PC-9 (cell line): ENCODE measurements at regions of chr2 and their contacts with region 1.

Region 1: DNA sequence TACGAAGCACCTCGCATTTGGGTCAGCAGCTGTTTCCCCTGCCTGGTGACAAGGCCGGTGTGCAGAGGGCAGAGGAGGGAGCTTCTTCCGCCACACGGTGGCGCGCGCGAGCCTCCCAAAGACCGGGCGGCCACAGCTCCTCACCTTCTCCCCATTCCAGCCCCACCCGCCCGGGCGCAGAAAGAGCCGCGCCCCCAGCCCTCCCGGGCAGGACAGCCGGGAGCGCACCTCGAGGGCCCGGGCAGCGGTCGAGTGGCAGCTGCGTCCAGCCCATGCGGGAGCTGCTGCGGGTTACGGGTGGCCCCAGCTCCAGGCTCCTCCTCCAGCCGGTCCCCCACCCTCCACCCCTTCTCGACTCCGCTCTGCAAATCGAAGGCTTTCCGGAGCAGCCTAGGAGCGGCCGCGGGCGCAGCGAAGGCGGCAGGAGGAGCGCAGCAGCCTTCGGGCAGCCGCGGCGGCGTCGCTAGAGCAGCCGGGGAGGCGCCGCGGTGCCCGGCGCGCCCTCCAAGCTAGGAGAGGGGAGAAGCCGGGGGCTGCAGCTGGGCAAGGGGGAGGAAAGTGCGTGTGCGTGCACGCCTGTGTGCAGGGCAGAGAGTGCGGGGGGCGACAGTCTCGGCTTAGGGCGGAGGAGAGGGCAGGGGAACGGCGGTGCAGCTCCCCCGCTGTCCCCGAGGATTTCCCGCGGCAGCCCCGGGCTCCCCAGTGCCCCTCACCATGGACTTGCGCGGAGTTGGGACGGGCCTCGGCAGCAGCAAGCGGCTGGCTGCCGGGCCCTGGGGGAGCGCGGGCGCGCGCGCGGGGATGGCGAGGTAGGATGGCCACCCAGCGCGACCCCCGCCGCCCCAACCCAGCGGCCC is at the start of gene CCDC85A:
- DNase-seq: peak in 1 of 2 experiments; percentile 89
- H3K4me3 ChIP-seq: no peak within 1 kb of the TSS
- H3K27ac ChIP-seq: no peak within 1 kb of the TSS
- H3K4me1 ChIP-seq: no peaks in the 10 kb centered on the region
- H3K27me3 ChIP-seq: peaks cover 89% of the 10 kb centered on the region
- CTCF ChIP-seq: peak; percentile 87
- total RNA-seq, gene CCDC85A: 0.10 TPM in 1 of 2 replicates, not detected in the other

Region 2: DNA sequence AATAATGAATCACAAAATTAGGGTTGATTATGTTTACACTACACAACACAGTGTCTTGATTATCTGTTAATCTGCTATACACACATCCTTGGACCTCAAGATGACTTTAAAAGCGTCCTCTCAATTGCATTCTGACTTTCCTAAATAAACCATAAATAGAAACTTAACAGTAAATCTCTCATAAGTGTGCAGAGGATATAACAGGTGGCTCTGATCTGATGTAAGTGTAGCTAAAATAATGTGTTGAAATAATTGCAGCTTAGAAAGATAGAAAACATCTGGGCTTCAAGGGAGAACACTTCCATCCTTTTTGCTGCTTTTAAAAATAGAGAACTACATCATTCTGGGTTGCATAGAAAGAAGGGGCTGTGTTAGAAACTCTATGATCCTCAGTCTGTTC is 181.9 kb before region 1 on chr2:
- CTCF ChIA-PET with region 1: no interaction called
- POLR2A ChIA-PET with region 1: no interaction called
- intact Hi-C with region 1: no loop called
- DNase-seq: no peak
- H3K4me3 ChIP-seq: no peak overlapping the region
- H3K27ac ChIP-seq: no peak overlapping the region
- H3K4me1 ChIP-seq: no peaks in the 10 kb centered on the region
- H3K27me3 ChIP-seq: no peaks in the 10 kb centered on the region
- CTCF ChIP-seq: no peak

Region 3: GRCh38 chr2:56148825-56149224 is 35.0 kb before region 1 on chr2:
- CTCF ChIA-PET with region 1: no interaction called
- POLR2A ChIA-PET with region 1: no interaction called
- intact Hi-C with region 1: no loop called
- DNase-seq: no peak
- H3K4me3 ChIP-seq: no peak overlapping the region
- H3K27ac ChIP-seq: no peak overlapping the region
- H3K4me1 ChIP-seq: no peaks in the 10 kb centered on the region
- H3K27me3 ChIP-seq: peaks cover 2% of the 10 kb centered on the region; the same call in 1 of the 2 replicates
- CTCF ChIP-seq: no peak

Region 4: GRCh38 chr2:56202381-56203121 is 18.7 kb after region 1 on chr2:
- CTCF ChIA-PET with region 1: no interaction called
- POLR2A ChIA-PET with region 1: no interaction called
- intact Hi-C with region 1: no loop called
- DNase-seq: no peak
- H3K4me3 ChIP-seq: no peak overlapping the region
- H3K27ac ChIP-seq: no peak overlapping the region
- H3K4me1 ChIP-seq: no peaks in the 10 kb centered on the region
- H3K27me3 ChIP-seq: peaks cover 36% of the 10 kb centered on the region
- CTCF ChIP-seq: no peak

Region 5: GRCh38 chr2:56749152-56749752 is 565.4 kb after region 1 on chr2:
- CTCF ChIA-PET with region 1: interaction called, 6 read pairs
- POLR2A ChIA-PET with region 1: no interaction called
- intact Hi-C with region 1: loop called (anchors 2 kb)
- DNase-seq: no peak
- H3K4me3 ChIP-seq: no peak overlapping the region
- H3K27ac ChIP-seq: no peak overlapping the region
- H3K4me1 ChIP-seq: no peaks in the 10 kb centered on the region
- H3K27me3 ChIP-seq: no peaks in the 10 kb centered on the region
- CTCF ChIP-seq: peak; percentile 69

Region 6: DNA sequence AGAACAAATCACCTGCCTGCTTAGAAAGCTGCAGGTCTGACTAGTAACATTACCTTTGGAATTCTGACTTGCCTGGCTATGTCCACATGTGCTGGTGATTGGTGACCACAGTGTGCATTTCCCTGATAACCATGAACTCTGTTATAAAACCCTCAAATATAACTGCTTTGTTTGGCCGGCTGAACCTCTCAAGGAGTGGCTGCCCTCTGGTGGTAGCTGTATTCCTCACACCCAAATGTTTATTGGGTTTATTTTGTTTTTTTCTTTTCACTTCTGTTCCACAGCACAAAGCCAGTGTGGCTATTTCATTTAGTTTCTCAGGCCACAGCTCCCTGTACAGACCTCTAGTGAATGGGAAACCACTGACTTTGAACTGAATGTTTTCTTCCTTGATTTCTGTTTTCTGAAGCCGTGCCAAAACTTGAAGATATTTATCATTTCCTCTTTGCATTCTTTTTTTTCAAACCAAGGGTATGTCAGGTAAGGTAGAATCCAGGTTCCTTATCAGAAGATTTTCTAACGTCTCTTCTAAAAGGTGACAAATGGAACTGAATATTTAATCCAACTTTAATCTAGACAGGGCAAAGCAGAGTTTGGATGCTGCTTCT is 1313.7 kb after region 1 on chr2:
- CTCF ChIA-PET with region 1: interaction called, 5 read pairs
- POLR2A ChIA-PET with region 1: no interaction called
- intact Hi-C with region 1: loop called (anchors 1 kb)
- DNase-seq: peak in 1 of 2 experiments; percentile 56
- H3K4me3 ChIP-seq: no peak overlapping the region
- H3K27ac ChIP-seq: no peak overlapping the region
- H3K4me1 ChIP-seq: no peaks in the 10 kb centered on the region
- H3K27me3 ChIP-seq: no peaks in the 10 kb centered on the region
- CTCF ChIP-seq: peak; percentile 94

Region 7: GRCh38 chr2:57516698-57517340 is 1332.9 kb after region 1 on chr2:
- CTCF ChIA-PET with region 1: no interaction called
- POLR2A ChIA-PET with region 1: no interaction called
- intact Hi-C with region 1: loop called (anchors 5 kb)
- DNase-seq: peak in 1 of 2 experiments; percentile 51
- H3K4me3 ChIP-seq: no peak overlapping the region
- H3K27ac ChIP-seq: no peak overlapping the region
- H3K4me1 ChIP-seq: no peaks in the 10 kb centered on the region
- H3K27me3 ChIP-seq: no peaks in the 10 kb centered on the region
- CTCF ChIP-seq: peak; percentile 86